B cell (primary cell): ENCODE measurements at regions of chr13 and their contacts with region 1.

Region 1: GRCh38 chr13:79775830-79776229 is 294.9 kb downstream of the NDFIP2 start:
- DNase-seq: peak; percentile 44
- ATAC-seq: no peak
- H3K4me3 ChIP-seq: no peak overlapping the region
- H3K4me3 Mint-ChIP-seq: no peak overlapping the region
- H3K27ac ChIP-seq: no peak overlapping the region
- H3K27ac Mint-ChIP-seq: no peak overlapping the region
- H3K4me1 ChIP-seq: no peaks in the 10 kb centered on the region
- H3K4me1 Mint-ChIP-seq: no peaks in the 10 kb centered on the region
- H3K27me3 ChIP-seq: no peaks in the 10 kb centered on the region
- H3K27me3 Mint-ChIP-seq: peaks cover 5% of the 10 kb centered on the region
- CTCF ChIP-seq: peak; percentile 57

Region 2: DNA sequence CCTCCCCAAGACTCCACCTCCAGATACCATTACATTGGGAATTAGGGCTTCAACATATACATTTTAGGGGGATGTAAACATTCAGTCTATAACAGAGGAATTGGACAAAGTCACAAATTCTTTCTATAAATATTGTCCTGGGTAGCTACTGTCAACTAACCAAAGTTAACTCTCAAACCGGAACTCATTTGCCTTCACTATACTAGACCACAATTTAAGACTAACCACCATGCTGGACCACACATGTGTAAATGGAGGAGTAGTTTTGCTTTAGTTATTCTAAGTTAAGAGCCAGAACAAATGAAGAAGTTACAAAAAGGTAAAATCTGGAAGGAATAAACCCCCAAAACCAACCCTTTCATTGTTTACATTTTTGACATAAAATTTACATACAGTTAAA is 72.1 kb before region 1 on chr13:
- CTCF ChIA-PET with region 1: no interaction called
- POLR2A ChIA-PET with region 1: no interaction called
- intact Hi-C with region 1: no loop called
- DNase-seq: no peak
- ATAC-seq: no peak
- H3K4me3 ChIP-seq: no peak overlapping the region
- H3K4me3 Mint-ChIP-seq: no peak overlapping the region
- H3K27ac ChIP-seq: no peak overlapping the region
- H3K27ac Mint-ChIP-seq: no peak overlapping the region
- H3K4me1 ChIP-seq: no peaks in the 10 kb centered on the region
- H3K4me1 Mint-ChIP-seq: no peaks in the 10 kb centered on the region
- H3K27me3 ChIP-seq: no peaks in the 10 kb centered on the region
- H3K27me3 Mint-ChIP-seq: no peaks in the 10 kb centered on the region
- CTCF ChIP-seq: no peak

Region 3: DNA sequence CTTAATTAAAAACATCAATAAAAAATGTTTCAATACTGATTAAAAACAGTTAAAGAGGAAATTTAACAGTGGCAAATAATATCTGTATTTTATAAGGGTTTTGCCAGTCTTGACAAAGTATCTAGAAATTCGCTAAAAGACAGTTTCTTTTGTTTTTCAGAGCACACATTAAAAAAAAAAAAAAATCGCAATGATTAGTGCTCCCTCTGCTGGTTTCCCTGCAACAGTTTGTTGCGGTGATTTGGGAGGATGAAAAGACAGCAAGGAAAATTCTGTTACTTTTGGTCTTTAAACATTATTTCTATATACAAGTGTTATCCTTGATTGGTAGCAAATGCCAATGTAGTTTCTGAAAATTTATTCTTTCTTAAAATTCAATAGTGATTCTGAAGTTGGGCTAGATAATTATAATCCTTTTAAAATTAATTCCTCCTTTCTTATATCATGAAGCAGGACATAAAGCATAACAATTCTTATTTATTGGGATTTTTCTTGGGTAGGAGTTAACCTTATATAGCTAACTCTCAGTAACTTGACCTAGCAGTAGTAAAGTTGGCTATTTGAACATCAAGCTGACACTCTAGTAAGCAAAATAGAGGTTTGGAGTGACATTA is 588.2 kb after region 1 on chr13:
- CTCF ChIA-PET with region 1: no interaction called
- POLR2A ChIA-PET with region 1: no interaction called
- intact Hi-C with region 1: loop called (anchors 1 kb)
- DNase-seq: peak; percentile 20
- ATAC-seq: no peak
- H3K4me3 ChIP-seq: no peak overlapping the region
- H3K4me3 Mint-ChIP-seq: no peak overlapping the region
- H3K27ac ChIP-seq: no peak overlapping the region
- H3K27ac Mint-ChIP-seq: no peak overlapping the region
- H3K4me1 ChIP-seq: no peaks in the 10 kb centered on the region
- H3K4me1 Mint-ChIP-seq: peaks cover 1% of the 10 kb centered on the region
- H3K27me3 ChIP-seq: no peaks in the 10 kb centered on the region
- H3K27me3 Mint-ChIP-seq: no peaks in the 10 kb centered on the region
- CTCF ChIP-seq: peak; percentile 66